Activated CD4-positive, alpha-beta memory T cell treated with anti-CD3 and anti-CD28 coated beads, Interleukin-2, amount 10 ng/mL, durations not matched to agents 7 days and 5 days (primary cell): ENCODE measurements at regions of chr20 and their contacts with region 1.

Region 1: DNA sequence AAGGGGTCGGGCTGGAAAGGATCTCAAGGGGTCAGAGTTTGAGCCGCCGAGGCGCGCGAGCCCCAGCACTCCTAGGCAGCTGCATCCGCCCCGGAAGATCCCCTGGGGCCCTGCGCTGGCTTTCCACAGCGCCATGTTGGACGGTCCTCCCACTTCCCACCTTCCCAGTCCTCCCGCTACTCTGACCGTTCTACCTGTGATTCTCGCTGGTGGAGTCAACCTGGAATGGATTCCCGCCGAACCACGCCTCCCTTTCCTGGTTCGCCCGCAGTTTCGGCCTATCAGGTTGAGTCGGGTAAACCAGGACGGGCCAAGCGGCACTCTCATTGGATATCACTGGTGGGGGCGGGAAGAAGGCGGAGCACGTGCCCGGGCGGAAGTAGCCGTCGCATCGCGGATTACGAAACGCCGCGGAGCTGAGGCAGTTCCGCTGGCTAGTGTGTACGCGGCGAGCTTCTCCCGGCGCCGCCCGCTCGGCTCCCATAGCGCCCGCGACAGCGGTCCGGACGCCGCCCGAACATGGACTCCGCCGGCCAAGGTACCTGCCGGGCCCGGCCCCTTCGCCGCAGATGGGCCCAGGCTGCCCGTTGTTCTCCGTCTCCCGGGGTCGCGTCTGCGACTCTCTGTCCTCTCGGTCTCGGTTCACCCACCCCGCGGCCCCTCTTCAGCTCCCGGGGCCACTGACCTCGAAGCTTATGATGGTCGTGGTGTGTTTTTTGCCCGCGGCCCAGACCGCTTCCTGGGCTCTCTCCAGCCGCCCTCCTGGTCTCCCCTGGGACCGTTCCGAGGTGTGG is at the start of gene TPD52L2:
- DNase-seq: peak; percentile 99
- H3K4me3 Mint-ChIP-seq: peak within 1 kb of the TSS; percentile 83
- H3K27ac Mint-ChIP-seq: peak within 1 kb of the TSS; percentile 88
- H3K4me1 Mint-ChIP-seq: peaks cover 40% of the 10 kb centered on the region
- H3K27me3 Mint-ChIP-seq: no peaks in the 10 kb centered on the region
- total RNA-seq, gene TPD52L2: 48.2 to 48.7 TPM

Region 2: GRCh38 chr20:63707549-63708300 is 157.3 kb before region 1 on chr20 and contains the starts of genes ARFRP1 and ZGPAT:
- CTCF ChIA-PET with region 1: interaction called, 29 read pairs
- POLR2A ChIA-PET with region 1: interaction called, 15 read pairs
- DNase-seq: peak; percentile 93
- H3K4me3 Mint-ChIP-seq: peak within 1 kb of the TSS; percentile 90
- H3K27ac Mint-ChIP-seq: peak within 1 kb of the TSS; percentile 87
- H3K4me1 Mint-ChIP-seq: peaks cover 59% of the 10 kb centered on the region
- H3K27me3 Mint-ChIP-seq: no peaks in the 10 kb centered on the region
- total RNA-seq, gene ARFRP1: 52.9 to 53.4 TPM
- total RNA-seq, gene ZGPAT: 41.6 to 42.8 TPM

Region 3: GRCh38 chr20:63739130-63740069 is 125.6 kb before region 1 on chr20 and contains the start of gene SLC2A4RG:
- CTCF ChIA-PET with region 1: interaction called, 3 read pairs
- POLR2A ChIA-PET with region 1: interaction called, 14 read pairs
- DNase-seq: peak; percentile 76
- H3K4me3 Mint-ChIP-seq: peak within 1 kb of the TSS; percentile 62
- H3K27ac Mint-ChIP-seq: peak within 1 kb of the TSS; percentile 16
- H3K4me1 Mint-ChIP-seq: peaks cover 18% of the 10 kb centered on the region
- H3K27me3 Mint-ChIP-seq: no peaks in the 10 kb centered on the region
- total RNA-seq, gene SLC2A4RG: 88.3 to 90.4 TPM

Region 4: GRCh38 chr20:63894358-63895201 is 29.5 kb after region 1 on chr20 and contains the start of gene DNAJC5:
- CTCF ChIA-PET with region 1: interaction called, 6 read pairs
- POLR2A ChIA-PET with region 1: interaction called, 29 read pairs
- DNase-seq: peak; percentile 97
- H3K4me3 Mint-ChIP-seq: peak within 1 kb of the TSS; percentile 95
- H3K27ac Mint-ChIP-seq: peak within 1 kb of the TSS; percentile 99
- H3K4me1 Mint-ChIP-seq: peaks cover 40% of the 10 kb centered on the region
- H3K27me3 Mint-ChIP-seq: no peaks in the 10 kb centered on the region
- total RNA-seq, gene DNAJC5: 58.6 to 59.7 TPM

Region 5: DNA sequence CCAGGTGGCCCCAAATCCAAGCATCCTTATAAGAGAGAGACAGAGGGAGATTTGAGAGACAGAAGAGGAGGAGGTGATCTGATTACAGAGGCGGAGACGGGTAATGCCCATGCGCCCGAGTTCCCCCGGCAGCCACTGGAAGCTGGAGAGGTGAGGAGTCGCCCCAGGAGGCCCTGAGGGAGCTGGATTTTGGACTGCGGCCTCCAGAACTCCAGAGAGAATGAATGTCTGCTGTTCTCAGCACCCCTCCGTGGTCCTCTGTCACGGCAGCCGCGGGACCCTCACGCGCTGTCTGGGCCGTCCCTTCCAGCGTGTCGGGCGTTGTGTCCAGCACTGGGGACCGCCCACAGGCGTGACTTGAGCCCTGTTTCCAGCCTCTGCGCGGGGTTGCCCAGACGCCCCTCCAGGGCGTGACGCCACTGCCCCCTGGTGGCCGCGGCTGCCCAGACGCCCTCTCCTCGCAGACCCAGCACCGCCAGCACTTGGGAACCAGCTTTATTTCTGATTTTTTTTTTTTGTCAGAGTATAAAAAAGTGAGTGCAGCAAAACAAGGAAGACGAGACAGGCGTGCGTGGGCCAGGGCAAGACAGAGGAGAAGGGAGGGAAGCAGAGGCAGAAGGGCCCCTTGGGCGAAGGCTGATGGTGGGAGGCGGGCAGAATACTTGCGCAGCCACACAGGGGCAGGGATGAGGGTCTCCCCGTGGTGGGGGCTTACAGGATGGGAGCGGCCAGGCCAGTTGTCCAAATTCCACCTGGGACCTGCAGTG is 108.8 kb after region 1 on chr20:
- CTCF ChIA-PET with region 1: interaction called, 10 read pairs
- POLR2A ChIA-PET with region 1: interaction called, 24 read pairs
- DNase-seq: peak; percentile 79
- H3K4me3 Mint-ChIP-seq: no peak overlapping the region
- H3K27ac Mint-ChIP-seq: no peak overlapping the region
- H3K4me1 Mint-ChIP-seq: peaks cover 44% of the 10 kb centered on the region
- H3K27me3 Mint-ChIP-seq: no peaks in the 10 kb centered on the region